Ascending aorta (tissue), 2 donors: ENCODE measurements at regions of chr14 and their contacts with region 1.

Region 1: GRCh38 chr14:69398053-69398817 is at the starts of genes ERH and SLC39A9:
- DNase-seq: peak; percentile 85 to 98
- H3K4me3 ChIP-seq: peak within 1 kb of the TSS; percentile 82 to 95
- H3K27ac ChIP-seq: peak within 1 kb of the TSS; percentile 87 to 92
- H3K4me1 ChIP-seq: peaks cover 8 to 34% of the 10 kb centered on the region in 2 donors
- H3K27me3 ChIP-seq: no peaks in the 10 kb centered on the region
- CTCF ChIP-seq: no peak
- total RNA-seq, gene ERH: 31.1 TPM
- total RNA-seq, gene SLC39A9: 26.2 TPM

Region 2: DNA sequence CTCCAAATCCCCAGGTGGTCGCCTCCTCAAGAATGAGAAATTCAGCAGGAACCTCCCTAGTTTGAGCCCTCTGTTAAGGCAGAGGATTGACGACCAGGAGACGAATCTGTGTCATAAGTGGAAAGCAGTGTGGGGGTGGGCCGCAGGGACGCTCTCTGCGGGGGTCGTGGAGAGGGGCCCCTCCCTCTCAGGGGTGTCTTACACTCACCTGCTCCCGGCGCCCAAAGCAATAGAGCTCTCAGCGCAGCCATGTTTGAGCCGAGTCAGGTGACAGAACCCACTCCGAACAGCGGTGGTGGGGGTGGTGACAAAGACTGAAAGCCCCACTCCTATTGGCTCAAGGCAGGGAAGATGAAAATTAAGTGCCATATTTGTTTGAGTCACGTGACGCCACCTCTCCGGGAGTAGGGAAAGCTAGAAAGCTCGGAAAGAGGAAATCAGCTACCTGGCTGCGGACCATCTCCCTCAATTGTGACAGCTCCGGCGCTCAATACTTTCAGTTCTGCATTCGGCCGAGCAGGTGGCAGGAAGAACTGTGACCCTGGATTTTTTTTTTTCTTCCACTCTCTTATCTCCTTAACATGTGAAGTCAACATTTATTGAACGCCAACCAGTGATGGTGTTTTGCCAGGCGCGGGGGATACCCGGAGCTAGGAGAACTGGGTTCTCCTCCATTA is 1581.8 kb before region 1 on chr14 and contains the start of gene ZFYVE26:
- intact Hi-C with region 1: loop called (anchors 2 kb)
- DNase-seq: peak; percentile 86 to 96
- H3K4me3 ChIP-seq: peak within 1 kb of the TSS; percentile 69 to 73
- H3K27ac ChIP-seq: peak within 1 kb of the TSS; percentile 41 to 76
- H3K4me1 ChIP-seq: peaks cover 0 to 7% of the 10 kb centered on the region in 2 donors
- H3K27me3 ChIP-seq: no peaks in the 10 kb centered on the region
- CTCF ChIP-seq: no peak
- total RNA-seq, gene ZFYVE26: 19.3 TPM

Region 3: DNA sequence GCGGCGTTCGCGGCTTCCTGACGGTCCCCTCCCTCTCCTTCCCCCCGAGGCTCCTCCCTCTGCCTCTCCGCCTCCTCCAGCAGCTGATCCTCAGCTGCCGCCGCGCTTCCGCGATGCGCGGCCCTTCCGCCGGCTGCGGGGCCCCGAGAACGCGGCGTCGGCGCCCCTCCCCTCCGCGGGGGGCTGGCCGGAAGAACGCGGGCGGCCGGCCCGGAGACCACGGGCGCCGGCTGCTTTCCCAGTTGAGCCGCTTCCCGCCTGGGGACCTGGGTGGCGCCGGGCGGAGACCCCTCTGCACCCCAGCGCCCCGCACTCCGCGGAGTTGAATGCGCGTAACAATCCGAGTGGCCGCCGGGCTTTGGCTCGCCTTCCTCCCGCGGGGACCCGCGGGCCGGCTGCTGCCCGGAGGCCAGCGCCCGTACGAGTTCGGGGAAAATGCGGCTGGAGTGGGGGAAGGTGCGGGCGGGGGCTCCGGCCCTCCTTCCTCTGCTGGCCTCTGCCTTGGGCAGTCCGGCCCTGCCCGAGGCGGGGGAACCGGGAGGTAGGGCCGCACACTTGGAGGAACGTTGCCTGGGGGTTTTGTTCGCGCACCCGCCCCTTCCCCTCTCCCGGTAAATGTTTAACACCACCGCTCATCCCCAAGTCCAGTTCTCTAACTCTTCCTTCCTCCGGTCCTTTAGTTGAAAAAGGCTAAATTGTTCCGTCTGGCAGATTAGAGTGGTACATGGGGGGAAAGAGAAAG is 244.9 kb before region 1 on chr14:
- intact Hi-C with region 1: loop called (anchors 10 kb)
- DNase-seq: peak; percentile 65 to 97
- H3K4me3 ChIP-seq: peak overlapping the region; percentile 78 to 92
- H3K27ac ChIP-seq: peak overlapping the region; percentile 97 to 98
- H3K4me1 ChIP-seq: peaks cover 0 to 6% of the 10 kb centered on the region in 2 donors
- H3K27me3 ChIP-seq: no peaks in the 10 kb centered on the region
- CTCF ChIP-seq: peak in 1 of 3 experiments; percentile 27

Region 4: DNA sequence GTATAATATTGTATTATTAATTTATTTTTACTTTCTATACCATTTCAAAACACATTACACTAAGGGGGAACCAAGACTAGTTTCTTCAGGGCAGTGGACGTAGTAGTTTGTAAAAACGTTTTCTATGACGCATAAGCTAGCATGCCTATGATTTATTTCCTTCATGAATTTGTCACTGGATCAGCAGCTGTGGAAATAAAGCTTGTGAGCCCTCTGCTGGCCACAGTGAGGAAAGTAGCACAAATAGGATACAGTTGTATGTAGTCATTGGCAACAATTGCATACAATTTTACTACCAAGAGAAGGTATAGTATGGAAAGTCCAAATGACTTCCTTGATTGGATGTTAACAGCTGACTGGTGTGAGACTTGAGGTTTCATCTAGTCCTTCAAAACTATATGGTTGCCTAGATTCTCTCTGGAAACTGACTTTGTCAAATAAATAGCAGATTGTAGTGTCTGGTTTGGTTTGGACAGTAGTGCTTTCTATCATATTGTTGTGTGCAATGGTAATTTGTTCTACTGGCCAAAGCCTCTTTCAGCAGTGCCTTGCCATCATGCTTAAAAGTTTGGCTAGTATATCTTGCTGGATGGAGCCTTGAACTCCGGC is 62.0 kb after region 1 on chr14:
- intact Hi-C with region 1: loop called (anchors 5 kb)
- DNase-seq: peak in 1 of 2 donors; percentile 81
- H3K4me3 ChIP-seq: no peak overlapping the region
- H3K27ac ChIP-seq: no peak overlapping the region
- H3K4me1 ChIP-seq: no peaks in the 10 kb centered on the region
- H3K27me3 ChIP-seq: no peaks in the 10 kb centered on the region
- CTCF ChIP-seq: peak; percentile 62 to 79 (median 71)

Region 5: GRCh38 chr14:69766984-69767368 is 368.7 kb after region 1 on chr14 and contains the start of gene SRSF5:
- intact Hi-C with region 1: loop called (anchors 5 kb)
- DNase-seq: peak; percentile 84 to 98
- H3K4me3 ChIP-seq: peak within 1 kb of the TSS; percentile 91 to 99
- H3K27ac ChIP-seq: peak within 1 kb of the TSS; percentile 100
- H3K4me1 ChIP-seq: peaks cover 19 to 32% of the 10 kb centered on the region in 2 donors
- H3K27me3 ChIP-seq: no peaks in the 10 kb centered on the region
- CTCF ChIP-seq: no peak
- total RNA-seq, gene SRSF5: 113 TPM